ENCODE measurements at regions of chr7 and their contacts with region 1.

Region 1: GRCh38 chr7:1065263-1066260 is 21.2 kb downstream of the GPR146 start:
- DNase-seq: no peak
- ATAC-seq: peak; percentile 91
- H3K4me3 ChIP-seq: peak overlapping the region; percentile 51; the same call in 1 of the 2 replicates
- H3K27ac ChIP-seq: no peak overlapping the region
- H3K4me1 ChIP-seq: peaks cover 26% of the 10 kb centered on the region
- H3K27me3 ChIP-seq: no peaks in the 10 kb centered on the region
- CTCF ChIP-seq: peak; percentile 86 to 98 (median 93); a peak in 5 of 6 replicates
- EP300 ChIP-seq: no peak
- POLR2A ChIP-seq: no peak
- RAD21 ChIP-seq: peak; percentile 95

Region 2: DNA sequence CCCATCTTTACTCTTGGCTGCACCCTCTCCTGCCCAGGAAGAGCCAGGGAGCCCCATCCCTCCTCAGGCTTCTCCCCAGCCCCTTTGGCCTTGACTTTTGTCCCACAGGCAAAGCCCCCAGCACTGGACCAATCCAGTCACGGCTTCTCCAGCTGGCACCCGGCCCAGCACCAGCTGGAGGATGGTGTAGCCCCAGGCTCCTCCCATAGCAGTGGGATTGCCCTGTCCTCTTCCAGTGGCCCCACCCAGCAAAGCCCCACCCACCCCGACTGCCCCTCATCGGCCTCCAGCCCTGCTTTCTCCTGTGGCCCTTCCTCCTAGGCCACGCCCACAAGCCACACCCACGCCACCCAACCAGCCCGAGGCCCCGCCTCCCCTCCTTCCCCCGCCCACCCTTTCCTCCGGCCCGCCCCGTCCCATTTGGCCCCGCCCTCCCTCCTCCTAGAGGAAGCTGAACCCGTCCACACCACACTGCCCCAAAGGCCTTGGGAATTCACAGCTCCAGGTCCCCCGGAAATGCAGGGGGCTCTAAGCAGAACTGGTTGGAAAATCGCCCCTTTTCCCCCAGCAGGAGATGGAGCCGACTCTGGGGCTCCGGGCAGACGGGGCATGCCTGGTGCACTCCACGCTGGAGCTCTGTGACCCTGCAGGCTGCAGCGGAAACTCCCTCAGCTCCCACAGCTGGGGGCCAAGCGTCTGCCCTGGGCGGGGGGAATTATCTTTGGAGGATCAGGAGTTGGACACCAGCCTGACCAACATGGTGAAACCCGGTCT is 164.0 kb before region 1 on chr7:
- CTCF ChIA-PET with region 1: no interaction called
- POLR2A ChIA-PET with region 1: no interaction called
- RAD21 ChIA-PET with region 1: no interaction called
- SMC1A ChIA-PET with region 1: no interaction called
- in situ Hi-C with region 1: no loop called
- intact Hi-C with region 1: loop called (anchors 10 kb)
- DNase-seq: no peak
- ATAC-seq: peak; percentile 83
- H3K4me3 ChIP-seq: no peak overlapping the region
- H3K27ac ChIP-seq: no peak overlapping the region
- H3K4me1 ChIP-seq: no peaks in the 10 kb centered on the region; the same call in 1 of the 2 replicates
- H3K27me3 ChIP-seq: no peaks in the 10 kb centered on the region
- CTCF ChIP-seq: no peak
- EP300 ChIP-seq: no peak
- POLR2A ChIP-seq: no peak
- RAD21 ChIP-seq: no peak

Region 3: GRCh38 chr7:974820-975681 is 90.5 kb before region 1 on chr7 and contains the start of gene COX19:
- CTCF ChIA-PET with region 1: interaction called, 21 read pairs
- POLR2A ChIA-PET with region 1: interaction called, 4 read pairs
- RAD21 ChIA-PET with region 1: interaction called, 8 read pairs
- SMC1A ChIA-PET with region 1: interaction called, 11 read pairs
- in situ Hi-C with region 1: no loop called
- intact Hi-C with region 1: no loop called
- DNase-seq: peak; percentile 42
- ATAC-seq: peak; percentile 87
- H3K4me3 ChIP-seq: peak within 1 kb of the TSS; percentile 78
- H3K27ac ChIP-seq: peak within 1 kb of the TSS; percentile 86
- H3K4me1 ChIP-seq: no peaks in the 10 kb centered on the region
- H3K27me3 ChIP-seq: no peaks in the 10 kb centered on the region
- CTCF ChIP-seq: no peak
- EP300 ChIP-seq: no peak
- POLR2A ChIP-seq: peak; percentile 94
- RAD21 ChIP-seq: no peak
- polyA plus RNA-seq, gene COX19: 3.7 to 6.6 TPM

Region 4: GRCh38 chr7:1044191-1045068 is 21.1 kb before region 1 on chr7 and contains the start of gene GPR146:
- CTCF ChIA-PET with region 1: interaction called, 19 read pairs
- POLR2A ChIA-PET with region 1: interaction called, 7 read pairs
- RAD21 ChIA-PET with region 1: interaction called, 9 read pairs
- SMC1A ChIA-PET with region 1: interaction called, 11 read pairs
- in situ Hi-C with region 1: no loop called
- intact Hi-C with region 1: loop called (anchors 1 kb)
- DNase-seq: no peak
- ATAC-seq: peak; percentile 98
- H3K4me3 ChIP-seq: peak within 1 kb of the TSS; percentile 60; the same call in 1 of the 2 replicates
- H3K27ac ChIP-seq: peak within 1 kb of the TSS; percentile 68
- H3K4me1 ChIP-seq: peaks cover 14% of the 10 kb centered on the region
- H3K27me3 ChIP-seq: no peaks in the 10 kb centered on the region
- CTCF ChIP-seq: peak; percentile 53 to 66 (median 63)
- EP300 ChIP-seq: no peak
- POLR2A ChIP-seq: peak; percentile 71
- RAD21 ChIP-seq: no peak; the same call in 1 of the 2 replicates
- polyA plus RNA-seq, gene GPR146: not detected

Region 5: DNA sequence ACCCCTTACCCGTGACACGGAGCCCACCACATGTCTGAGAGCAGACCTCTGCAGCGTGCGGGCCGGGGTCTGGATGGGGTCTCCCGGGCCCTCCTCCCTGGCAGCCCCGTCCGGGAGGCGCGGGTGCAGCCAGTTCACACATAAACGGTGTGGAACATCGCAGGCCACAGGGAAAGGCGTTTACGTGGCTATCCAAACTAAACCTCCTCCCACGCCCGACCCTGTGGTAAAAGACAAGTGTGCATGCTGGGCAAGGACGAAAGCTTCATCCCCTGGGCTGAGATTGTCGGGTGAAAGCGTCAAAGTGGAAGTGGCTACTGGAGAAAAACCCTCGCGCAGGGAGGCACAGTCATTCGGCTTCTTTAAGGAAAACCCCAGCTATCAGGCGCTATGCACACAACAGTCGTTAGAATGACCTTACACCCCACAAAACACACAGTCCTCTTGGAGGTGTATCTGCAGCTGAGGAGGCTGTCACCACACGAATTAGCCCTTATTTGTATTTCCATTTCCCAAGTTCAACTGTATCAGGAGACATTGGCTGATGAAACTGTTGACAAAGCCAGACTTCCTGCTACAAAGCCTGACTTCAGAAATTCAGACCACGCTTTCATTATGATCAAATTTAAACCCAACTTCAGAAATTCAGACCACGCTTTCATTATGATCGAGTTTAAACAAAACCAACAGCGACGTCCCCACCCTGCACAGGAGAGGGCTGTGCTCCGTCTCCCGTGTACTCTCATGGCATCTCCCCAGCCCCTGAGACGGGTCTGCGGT is 37.6 kb after region 1 on chr7:
- CTCF ChIA-PET with region 1: interaction called, 22 read pairs
- POLR2A ChIA-PET with region 1: no interaction called
- RAD21 ChIA-PET with region 1: interaction called, 3 read pairs
- SMC1A ChIA-PET with region 1: interaction called, 8 read pairs
- in situ Hi-C with region 1: no loop called
- intact Hi-C with region 1: no loop called
- DNase-seq: peak; percentile 73
- ATAC-seq: peak; percentile 79
- H3K4me3 ChIP-seq: peak overlapping the region; percentile 64
- H3K27ac ChIP-seq: peak overlapping the region; percentile 70
- H3K4me1 ChIP-seq: peaks cover 33% of the 10 kb centered on the region
- H3K27me3 ChIP-seq: no peaks in the 10 kb centered on the region
- CTCF ChIP-seq: no peak
- EP300 ChIP-seq: peak; percentile 38 to 78; a peak in 3 of 4 replicates
- POLR2A ChIP-seq: peak; percentile 62; the same call in 1 of the 2 replicates
- RAD21 ChIP-seq: no peak

Region 6: DNA sequence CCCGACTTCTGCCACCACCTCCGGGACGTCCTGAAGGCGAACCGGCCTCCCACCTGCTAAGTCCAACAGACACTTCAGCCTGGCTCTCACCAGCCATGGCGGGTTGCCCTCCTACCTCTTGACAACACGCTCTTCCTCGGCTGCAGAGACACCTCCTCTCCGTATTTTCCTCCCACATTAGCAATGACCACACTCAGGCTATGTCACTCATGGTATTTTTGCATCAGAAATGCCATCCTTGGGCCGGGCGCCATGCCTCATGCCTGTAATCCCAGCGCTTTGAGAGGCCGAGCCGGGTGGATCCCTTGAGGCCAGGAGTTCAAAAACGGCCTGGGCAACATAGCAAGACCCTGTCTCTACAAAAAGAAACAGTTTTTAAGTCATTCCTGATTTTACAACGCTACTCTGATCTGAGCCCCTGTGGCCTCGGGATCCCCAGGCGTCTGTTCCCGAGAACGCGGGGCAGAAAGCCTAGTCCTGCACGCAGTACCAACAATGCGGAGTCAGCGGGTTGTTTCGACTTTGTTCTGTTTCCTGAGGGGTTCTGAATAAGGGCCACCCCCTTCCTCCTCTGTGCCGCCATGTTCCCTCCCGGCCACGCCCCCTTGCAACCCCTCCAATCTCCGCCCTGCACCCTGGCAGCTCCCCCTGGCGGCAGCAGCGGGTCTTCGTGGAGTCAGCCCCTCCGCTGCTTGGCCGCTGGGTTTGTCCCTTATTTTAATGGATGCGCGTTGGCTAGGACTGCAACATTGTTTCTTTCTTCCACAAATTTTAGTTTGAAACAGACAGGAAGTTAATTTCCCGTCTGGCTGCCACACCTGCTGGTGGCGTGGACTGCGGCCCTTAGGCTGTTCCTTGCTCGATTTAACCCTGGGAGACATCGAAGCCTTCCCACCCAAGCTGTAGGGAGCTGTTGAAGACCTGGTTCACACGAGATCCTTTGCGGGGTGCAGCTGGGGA is 104.1 kb after region 1 on chr7:
- CTCF ChIA-PET with region 1: interaction called, 77 read pairs
- POLR2A ChIA-PET with region 1: no interaction called
- RAD21 ChIA-PET with region 1: interaction called, 8 read pairs
- SMC1A ChIA-PET with region 1: interaction called, 23 read pairs
- in situ Hi-C with region 1: no loop called
- intact Hi-C with region 1: no loop called
- DNase-seq: peak; percentile 56
- ATAC-seq: peak; percentile 100
- H3K4me3 ChIP-seq: peak overlapping the region; percentile 47
- H3K27ac ChIP-seq: peak overlapping the region; percentile 82
- H3K4me1 ChIP-seq: peaks cover 9% of the 10 kb centered on the region
- H3K27me3 ChIP-seq: no peaks in the 10 kb centered on the region
- CTCF ChIP-seq: peak; percentile 90 to 98 (median 97)
- EP300 ChIP-seq: no peak
- POLR2A ChIP-seq: peak; percentile 74; the same call in 1 of the 2 replicates
- RAD21 ChIP-seq: peak; percentile 63

Region 7: DNA sequence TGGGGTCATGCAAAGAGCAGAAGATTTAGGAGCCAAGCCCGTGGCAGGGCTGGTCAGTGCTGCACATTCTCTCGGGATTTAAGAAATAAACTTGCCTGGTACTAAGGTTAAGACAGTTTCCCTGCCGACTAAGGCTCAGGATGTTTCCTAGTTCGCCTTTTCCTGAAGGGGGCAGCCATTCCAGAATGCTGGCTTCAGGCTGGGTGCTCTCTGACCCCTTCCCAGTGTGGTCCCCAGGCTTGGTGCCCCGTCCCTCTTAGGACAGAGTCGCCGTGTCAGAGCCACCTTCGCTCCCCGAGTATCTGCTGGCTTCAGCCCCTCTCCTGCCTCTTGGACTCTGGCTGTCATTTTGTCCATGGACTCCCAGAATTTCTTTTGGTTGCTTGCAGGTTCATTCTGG is 721.7 kb after region 1 on chr7:
- CTCF ChIA-PET with region 1: no interaction called
- POLR2A ChIA-PET with region 1: no interaction called
- RAD21 ChIA-PET with region 1: no interaction called
- SMC1A ChIA-PET with region 1: no interaction called
- in situ Hi-C with region 1: no loop called
- intact Hi-C with region 1: no loop called
- DNase-seq: no peak
- ATAC-seq: no peak
- H3K4me3 ChIP-seq: no peak overlapping the region
- H3K27ac ChIP-seq: no peak overlapping the region
- H3K4me1 ChIP-seq: no peaks in the 10 kb centered on the region
- H3K27me3 ChIP-seq: no peaks in the 10 kb centered on the region
- CTCF ChIP-seq: no peak
- EP300 ChIP-seq: no peak
- POLR2A ChIP-seq: no peak
- RAD21 ChIP-seq: no peak